ENCODE measurements at regions of chr1 and their contacts with region 1.

Region 1: GRCh38 chr1:234610348-234611152 is 572 bp upstream of the IRF2BP2 start:
- DNase-seq: peak; percentile 98
- H3K4me3 ChIP-seq: peak overlapping the region; percentile 48 to 90 (median 58)
- H3K27ac ChIP-seq: peak overlapping the region; percentile 97 to 100 (median 100)
- H3K4me1 ChIP-seq: peaks cover 0 to 41% (median 33%) of the 10 kb centered on the region in 4 donors
- H3K27me3 ChIP-seq: no peaks in the 10 kb centered on the region
- CTCF ChIP-seq: peak in 1 of 4 experiments; percentile 6
- EP300 ChIP-seq: peak in 2 of 4 donors; percentile 34 to 90
- POLR2A ChIP-seq: peak; percentile 85 to 89

Region 2: GRCh38 chr1:234533975-234534876 is 76.3 kb before region 1 on chr1:
- intact Hi-C with region 1: loop called (anchors 5 kb)
- DNase-seq: peak; percentile 99
- H3K4me3 ChIP-seq: no peak overlapping the region
- H3K27ac ChIP-seq: peak overlapping the region; percentile 88 to 99 (median 96)
- H3K4me1 ChIP-seq: peaks cover 0 to 98% (median 98%) of the 10 kb centered on the region in 4 donors
- H3K27me3 ChIP-seq: no peaks in the 10 kb centered on the region
- CTCF ChIP-seq: no peak
- EP300 ChIP-seq: peak; percentile 36 to 81 (median 60)
- POLR2A ChIP-seq: no peak

Region 3: GRCh38 chr1:234699795-234700665 is 89.5 kb after region 1 on chr1:
- intact Hi-C with region 1: loop called (anchors 5 kb)
- DNase-seq: peak; percentile 80
- H3K4me3 ChIP-seq: no peak overlapping the region
- H3K27ac ChIP-seq: peak overlapping the region; percentile 30 to 82 (median 74)
- H3K4me1 ChIP-seq: peaks cover 0 to 44% (median 30%) of the 10 kb centered on the region in 4 donors
- H3K27me3 ChIP-seq: no peaks in the 10 kb centered on the region
- CTCF ChIP-seq: no peak
- EP300 ChIP-seq: peak in 3 of 4 donors; percentile 63 to 66 (median 65)
- POLR2A ChIP-seq: no peak

Region 4: GRCh38 chr1:234862944-234863515 is 252.5 kb after region 1 on chr1:
- intact Hi-C with region 1: loop called (anchors 2 kb)
- DNase-seq: peak; percentile 92
- H3K4me3 ChIP-seq: no peak overlapping the region
- H3K27ac ChIP-seq: peak overlapping the region; percentile 66 to 83 (median 80)
- H3K4me1 ChIP-seq: peaks cover 0 to 42% (median 32%) of the 10 kb centered on the region in 4 donors
- H3K27me3 ChIP-seq: no peaks in the 10 kb centered on the region
- CTCF ChIP-seq: no peak
- EP300 ChIP-seq: peak in 1 of 4 donors; percentile 16
- POLR2A ChIP-seq: no peak

Region 5: GRCh38 chr1:234970731-234971476 is 360.4 kb after region 1 on chr1:
- intact Hi-C with region 1: loop called (anchors 5 kb)
- DNase-seq: peak; percentile 95
- H3K4me3 ChIP-seq: peak overlapping the region in 2 of 4 donors; percentile 43 to 44
- H3K27ac ChIP-seq: peak overlapping the region; percentile 75 to 90 (median 81)
- H3K4me1 ChIP-seq: peaks cover 0 to 65% (median 61%) of the 10 kb centered on the region in 4 donors
- H3K27me3 ChIP-seq: no peaks in the 10 kb centered on the region
- CTCF ChIP-seq: no peak
- EP300 ChIP-seq: peak in 1 of 4 donors; percentile 0
- POLR2A ChIP-seq: peak in 1 of 2 donors; percentile 18